HCT116 (cell line): ENCODE measurements at regions of chr10 and their contacts with region 1.

Region 1: DNA sequence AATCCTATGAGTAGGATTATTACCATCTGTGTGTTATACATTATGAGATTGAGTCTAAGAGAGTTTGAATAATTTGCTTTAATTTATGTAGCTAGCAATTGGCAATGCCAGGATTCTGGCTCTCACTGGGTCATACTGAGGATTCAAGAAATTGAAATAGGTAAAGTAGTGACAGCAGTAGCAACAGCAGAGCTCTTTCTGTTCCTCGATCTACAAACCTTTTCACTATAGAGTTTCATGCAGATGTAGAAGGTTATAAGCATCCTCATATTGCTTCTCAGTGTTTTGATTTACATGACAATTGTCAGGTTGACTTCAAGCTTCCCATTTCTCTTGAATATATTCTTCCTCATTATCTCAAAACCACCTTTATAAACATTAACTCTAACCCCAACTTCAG is 294.1 kb upstream of the CSTF2T start:
- DNase-seq: no peak
- ATAC-seq: no peak
- H3K4me3 ChIP-seq: no peak overlapping the region
- H3K27ac ChIP-seq: no peak overlapping the region
- H3K4me1 ChIP-seq: no peaks in the 10 kb centered on the region
- H3K27me3 ChIP-seq: peaks cover 23% of the 10 kb centered on the region
- CTCF ChIP-seq: no peak
- POLR2A ChIP-seq: no peak
- RAD21 ChIP-seq: no peak

Region 2: GRCh38 chr10:52004342-52004949 is 11.0 kb after region 1 on chr10:
- CTCF ChIA-PET with region 1: interaction called, 12 read pairs
- POLR2A ChIA-PET with region 1: no interaction called
- RAD21 ChIA-PET with region 1: no interaction called
- intact Hi-C with region 1: no loop called
- DNase-seq: peak; percentile 22
- ATAC-seq: peak; percentile 73
- H3K4me3 ChIP-seq: no peak overlapping the region
- H3K27ac ChIP-seq: no peak overlapping the region
- H3K4me1 ChIP-seq: no peaks in the 10 kb centered on the region
- H3K27me3 ChIP-seq: peaks cover 31% of the 10 kb centered on the region
- CTCF ChIP-seq: peak; percentile 26 to 62 (median 58); a peak in 5 of 6 replicates
- POLR2A ChIP-seq: no peak
- RAD21 ChIP-seq: peak; percentile 46